ENCODE measurements at regions of chr7 and their contacts with region 1.

Region 1: DNA sequence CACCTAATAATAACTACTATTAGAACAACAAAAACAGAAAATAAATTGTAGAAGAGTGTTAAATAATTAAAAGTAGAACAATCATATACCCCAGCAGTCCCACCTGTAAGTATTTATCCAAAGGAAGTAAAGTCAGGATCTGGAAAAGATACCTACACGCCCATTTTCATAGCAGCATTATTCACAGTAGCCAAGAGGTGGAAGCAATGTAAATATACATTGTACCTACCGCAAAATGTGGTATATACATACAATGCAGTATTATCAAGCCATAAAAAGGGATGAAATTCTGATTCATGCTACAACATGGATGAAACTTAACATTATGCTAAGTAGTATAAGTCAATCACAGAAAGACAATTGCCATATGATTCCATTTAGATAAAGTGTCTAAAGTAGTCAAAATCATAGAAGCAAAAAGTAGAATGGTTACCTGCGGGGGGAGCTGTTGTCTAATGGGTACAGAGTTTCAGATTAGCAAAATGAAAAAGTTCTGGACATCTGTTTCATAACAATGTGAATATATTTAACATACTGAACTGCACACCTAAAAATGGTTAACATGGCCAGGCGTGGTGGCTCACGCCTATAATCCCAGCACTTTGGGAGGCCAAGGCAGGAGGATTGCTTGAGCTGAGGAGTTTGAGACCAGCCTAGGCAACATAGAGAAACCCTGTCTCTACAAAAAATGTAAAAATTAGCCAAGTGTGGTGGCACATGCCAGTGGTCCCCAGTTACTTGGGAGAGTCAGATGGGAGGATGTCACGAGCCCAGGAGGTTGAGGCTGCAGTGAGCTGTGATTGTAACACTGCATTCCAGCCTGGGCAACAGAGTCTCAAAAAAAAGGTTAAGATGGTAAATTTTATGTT is 6.0 kb upstream of the TMED4 start:
- DNase-seq: peak in 7 of 9 donors; percentile 35 to 63 (median 60)
- ATAC-seq: peak; percentile 90
- H3K4me3 ChIP-seq: no peak overlapping the region
- H3K4me3 Mint-ChIP-seq: no peak overlapping the region
- H3K27ac ChIP-seq: no peak overlapping the region
- H3K27ac Mint-ChIP-seq: peak overlapping the region in 3 of 9 donors; percentile 6 to 71 (median 25)
- H3K4me1 ChIP-seq: peaks cover 0 to 4% of the 10 kb centered on the region in 2 donors
- H3K4me1 Mint-ChIP-seq: peaks cover 0 to 18% (median 6%) of the 10 kb centered on the region in 7 donors
- H3K27me3 ChIP-seq: no peaks in the 10 kb centered on the region
- H3K27me3 Mint-ChIP-seq: peaks cover 0 to 9% (median 0%) of the 10 kb centered on the region in 5 donors

Region 2: DNA sequence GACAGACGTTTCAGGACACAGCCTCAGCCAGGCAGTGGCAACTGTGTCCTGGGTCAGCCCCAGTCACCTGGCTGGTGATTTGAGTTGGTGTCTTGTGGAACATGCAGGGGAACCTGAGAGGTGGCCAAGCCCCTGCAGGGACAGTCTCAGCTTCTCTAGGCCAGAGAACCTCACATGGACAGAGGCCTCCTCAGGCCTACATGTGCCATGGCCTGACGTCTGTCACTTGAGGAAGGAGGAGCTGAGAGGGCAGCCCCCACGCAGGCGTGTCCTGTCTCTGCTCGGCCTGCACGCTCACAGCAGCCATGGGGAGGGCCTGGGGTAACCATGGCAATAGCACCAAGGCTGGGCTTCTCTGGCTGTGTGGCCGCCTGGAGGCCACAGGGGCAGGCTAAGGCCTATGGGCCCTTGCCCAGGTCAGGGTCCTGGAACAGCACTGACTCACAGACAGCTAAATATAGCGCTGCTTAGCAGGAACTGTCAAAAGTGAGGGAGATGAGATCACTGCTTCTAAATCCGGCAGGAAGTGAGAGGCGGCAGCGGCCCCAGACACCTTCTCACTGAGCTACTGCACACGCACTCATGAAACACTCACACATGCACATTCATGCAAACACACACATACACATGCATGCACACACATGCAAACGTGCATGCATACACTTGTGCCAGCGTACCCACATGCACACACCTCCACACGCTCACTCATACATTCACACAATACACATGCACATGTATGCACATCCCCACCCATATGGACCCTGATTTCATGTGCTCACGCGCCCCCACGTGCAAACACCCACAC is 330.3 kb before region 1 on chr7:
- CTCF ChIA-PET with region 1: no interaction called
- POLR2A ChIA-PET with region 1: no interaction called
- intact Hi-C with region 1: no loop called
- DNase-seq: peak; percentile 44 to 75 (median 67)
- ATAC-seq: peak; percentile 83
- H3K4me3 ChIP-seq: peak overlapping the region; percentile 10
- H3K4me3 Mint-ChIP-seq: peak overlapping the region; percentile 22 to 87 (median 75)
- H3K27ac ChIP-seq: peak overlapping the region; percentile 79
- H3K27ac Mint-ChIP-seq: peak overlapping the region; percentile 82 to 96 (median 94)
- H3K4me1 ChIP-seq: peaks cover 17 to 20% of the 10 kb centered on the region in 2 donors
- H3K4me1 Mint-ChIP-seq: peaks cover 13 to 29% (median 26%) of the 10 kb centered on the region in 7 donors
- H3K27me3 ChIP-seq: no peaks in the 10 kb centered on the region
- H3K27me3 Mint-ChIP-seq: no peaks in the 10 kb centered on the region

Region 3: GRCh38 chr7:44681645-44682044 is 93.6 kb after region 1 on chr7:
- CTCF ChIA-PET with region 1: no interaction called
- POLR2A ChIA-PET with region 1: no interaction called
- intact Hi-C with region 1: loop called in 1 of 2 experiments (anchors 5 kb)
- DNase-seq: no peak
- ATAC-seq: no peak
- H3K4me3 ChIP-seq: no peak overlapping the region
- H3K4me3 Mint-ChIP-seq: no peak overlapping the region
- H3K27ac ChIP-seq: no peak overlapping the region
- H3K27ac Mint-ChIP-seq: no peak overlapping the region
- H3K4me1 ChIP-seq: no peaks in the 10 kb centered on the region
- H3K4me1 Mint-ChIP-seq: peaks cover 0 to 4% (median 0%) of the 10 kb centered on the region in 7 donors
- H3K27me3 ChIP-seq: no peaks in the 10 kb centered on the region
- H3K27me3 Mint-ChIP-seq: no peaks in the 10 kb centered on the region

Region 4: GRCh38 chr7:44748045-44748947 is 160.2 kb after region 1 on chr7 and contains the start of gene ZMIZ2:
- CTCF ChIA-PET with region 1: no interaction called
- POLR2A ChIA-PET with region 1: no interaction called
- intact Hi-C with region 1: loop called in 1 of 2 experiments (anchors 1 kb)
- DNase-seq: peak; percentile 87 to 99 (median 93)
- ATAC-seq: peak; percentile 94
- H3K4me3 ChIP-seq: peak within 1 kb of the TSS; percentile 64
- H3K4me3 Mint-ChIP-seq: peak within 1 kb of the TSS; percentile 77 to 92 (median 88)
- H3K27ac ChIP-seq: peak within 1 kb of the TSS; percentile 98
- H3K27ac Mint-ChIP-seq: peak within 1 kb of the TSS; percentile 81 to 98 (median 92)
- H3K4me1 ChIP-seq: peaks cover 21 to 22% of the 10 kb centered on the region in 2 donors
- H3K4me1 Mint-ChIP-seq: peaks cover 22 to 63% (median 45%) of the 10 kb centered on the region in 7 donors
- H3K27me3 ChIP-seq: no peaks in the 10 kb centered on the region
- H3K27me3 Mint-ChIP-seq: no peaks in the 10 kb centered on the region
- total RNA-seq, gene ZMIZ2: 108 to 187 (median 144) TPM

Region 5: DNA sequence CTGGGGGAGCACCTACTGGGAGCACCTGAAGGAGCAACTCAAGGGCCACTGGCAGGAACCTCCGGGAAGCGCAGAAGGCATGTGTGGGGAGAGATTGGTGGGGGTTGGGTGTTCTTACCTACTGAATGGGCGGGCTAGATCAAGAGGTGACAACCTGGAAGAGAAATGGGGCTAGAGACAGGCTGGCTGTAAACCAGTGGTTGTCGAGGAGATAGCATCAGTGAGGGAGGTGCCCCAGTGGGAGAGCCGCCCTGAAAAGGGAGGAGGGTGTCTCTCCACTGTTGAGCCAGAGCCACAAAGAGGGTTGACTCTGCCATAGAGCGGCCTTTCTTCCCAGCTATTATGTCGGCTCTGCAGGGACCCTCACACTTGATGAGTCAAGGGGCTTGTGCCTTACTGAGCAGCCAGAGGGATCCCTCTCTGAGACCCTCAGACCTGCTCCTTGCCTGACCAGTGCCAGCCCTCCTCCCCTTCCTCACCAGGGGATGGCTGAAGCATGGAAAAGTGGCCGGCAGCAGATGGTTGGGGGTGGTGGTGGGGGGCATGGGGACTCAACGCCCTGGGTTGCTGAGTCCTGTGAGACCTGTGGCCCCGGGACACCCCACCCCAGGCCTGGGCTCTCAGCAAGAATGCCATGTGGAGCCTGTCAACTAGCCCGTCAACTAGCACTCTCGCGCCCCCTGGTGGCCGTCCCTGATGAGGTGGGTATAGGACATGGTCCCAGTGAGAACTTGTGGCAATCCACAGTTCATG is 333.7 kb after region 1 on chr7:
- CTCF ChIA-PET with region 1: interaction called, 6 read pairs
- POLR2A ChIA-PET with region 1: no interaction called
- intact Hi-C with region 1: loop called (anchors 1 kb)
- DNase-seq: peak; percentile 76 to 98 (median 86)
- ATAC-seq: peak; percentile 99
- H3K4me3 ChIP-seq: no peak overlapping the region
- H3K4me3 Mint-ChIP-seq: no peak overlapping the region
- H3K27ac ChIP-seq: no peak overlapping the region
- H3K27ac Mint-ChIP-seq: peak overlapping the region in 5 of 9 donors; percentile 6 to 78 (median 34)
- H3K4me1 ChIP-seq: peaks cover 0 to 9% of the 10 kb centered on the region in 2 donors
- H3K4me1 Mint-ChIP-seq: peaks cover 0 to 21% (median 0%) of the 10 kb centered on the region in 7 donors
- H3K27me3 ChIP-seq: no peaks in the 10 kb centered on the region
- H3K27me3 Mint-ChIP-seq: peaks cover 0 to 6% (median 0%) of the 10 kb centered on the region in 5 donors

Measured in naive thymus-derived CD4-positive, alpha-beta T cell (primary cell).